PC-3 (cell line): ENCODE measurements at regions of chr3 and their contacts with region 1.

Region 1: GRCh38 chr3:188772886-188773285 is 398.9 kb upstream of the TPRG1 start:
- DNase-seq: peak; percentile 64
- ATAC-seq: peak; percentile 95
- H3K4me3 ChIP-seq: no peak overlapping the region
- H3K27ac ChIP-seq: no peak overlapping the region
- H3K4me1 ChIP-seq: 0 out of 2 replicates have a peak, but pooled peaks cover 11% of the 10 kb centered on the region
- H3K27me3 ChIP-seq: no peaks in the 10 kb centered on the region
- CTCF ChIP-seq: no peak

Region 2: DNA sequence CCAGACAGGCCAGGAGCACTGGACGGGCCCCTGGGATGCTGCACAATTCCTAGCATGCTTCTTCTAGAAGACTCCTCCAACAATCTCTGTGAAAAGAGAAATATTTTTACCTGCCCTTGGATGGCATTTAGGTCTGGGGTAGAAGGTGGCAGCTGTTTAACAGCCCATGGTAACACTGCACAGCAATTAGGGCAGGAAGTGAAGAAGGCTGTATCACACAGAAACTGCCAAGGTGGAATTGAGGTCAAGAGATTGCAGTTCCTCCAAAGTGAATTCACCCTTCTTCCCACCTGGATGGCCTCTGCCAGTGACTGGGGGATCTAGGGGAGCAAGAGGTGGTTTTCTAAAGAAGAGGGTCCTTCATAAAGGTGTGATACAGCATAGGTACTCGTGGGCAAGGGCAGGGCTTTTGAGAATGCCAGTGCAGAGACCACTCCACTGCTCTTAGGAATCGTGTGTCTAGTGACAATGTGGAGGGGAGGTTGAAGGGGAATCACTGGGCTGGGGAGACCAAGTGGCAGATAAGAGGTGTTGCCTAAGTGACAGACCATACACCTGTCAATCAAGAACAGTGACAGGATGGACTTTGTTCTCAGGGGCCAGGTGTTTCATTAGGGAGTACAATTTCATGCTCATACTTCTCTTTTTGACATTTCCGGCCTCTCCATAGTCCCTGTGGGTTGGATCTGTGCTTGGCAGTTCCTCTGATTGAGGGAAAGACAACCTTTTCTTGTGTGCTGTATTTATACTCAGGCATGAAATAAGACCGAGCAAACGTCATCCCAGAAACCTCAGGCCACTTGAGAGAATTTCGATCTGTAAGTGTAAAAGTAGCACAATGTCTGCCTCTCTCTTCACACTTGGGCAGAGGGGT is 944.1 kb before region 1 on chr3:
- CTCF ChIA-PET with region 1: no interaction called
- POLR2A ChIA-PET with region 1: no interaction called
- intact Hi-C with region 1: no loop called
- DNase-seq: no peak
- ATAC-seq: no peak
- H3K4me3 ChIP-seq: no peak overlapping the region
- H3K27ac ChIP-seq: no peak overlapping the region
- H3K4me1 ChIP-seq: no peaks in the 10 kb centered on the region
- H3K27me3 ChIP-seq: no peaks in the 10 kb centered on the region
- CTCF ChIP-seq: no peak

Region 3: GRCh38 chr3:188881954-188882641 is 109.2 kb after region 1 on chr3:
- CTCF ChIA-PET with region 1: no interaction called
- POLR2A ChIA-PET with region 1: no interaction called
- intact Hi-C with region 1: loop called (anchors 5 kb)
- DNase-seq: peak; percentile 90
- ATAC-seq: peak; percentile 89
- H3K4me3 ChIP-seq: peak overlapping the region; percentile 18; the same call in 1 of the 2 replicates
- H3K27ac ChIP-seq: peak overlapping the region; percentile 62
- H3K4me1 ChIP-seq: peaks cover 28% of the 10 kb centered on the region
- H3K27me3 ChIP-seq: no peaks in the 10 kb centered on the region
- CTCF ChIP-seq: no peak

Region 4: GRCh38 chr3:188900421-188900951 is 127.6 kb after region 1 on chr3:
- CTCF ChIA-PET with region 1: no interaction called
- POLR2A ChIA-PET with region 1: interaction called, 13 read pairs
- intact Hi-C with region 1: no loop called
- DNase-seq: peak; percentile 82
- ATAC-seq: peak; percentile 87
- H3K4me3 ChIP-seq: no peak overlapping the region
- H3K27ac ChIP-seq: peak overlapping the region; percentile 25
- H3K4me1 ChIP-seq: peaks cover 21% of the 10 kb centered on the region
- H3K27me3 ChIP-seq: no peaks in the 10 kb centered on the region
- CTCF ChIP-seq: no peak